ENCODE measurements at regions of chr7 and their contacts with region 1.

Region 1: DNA sequence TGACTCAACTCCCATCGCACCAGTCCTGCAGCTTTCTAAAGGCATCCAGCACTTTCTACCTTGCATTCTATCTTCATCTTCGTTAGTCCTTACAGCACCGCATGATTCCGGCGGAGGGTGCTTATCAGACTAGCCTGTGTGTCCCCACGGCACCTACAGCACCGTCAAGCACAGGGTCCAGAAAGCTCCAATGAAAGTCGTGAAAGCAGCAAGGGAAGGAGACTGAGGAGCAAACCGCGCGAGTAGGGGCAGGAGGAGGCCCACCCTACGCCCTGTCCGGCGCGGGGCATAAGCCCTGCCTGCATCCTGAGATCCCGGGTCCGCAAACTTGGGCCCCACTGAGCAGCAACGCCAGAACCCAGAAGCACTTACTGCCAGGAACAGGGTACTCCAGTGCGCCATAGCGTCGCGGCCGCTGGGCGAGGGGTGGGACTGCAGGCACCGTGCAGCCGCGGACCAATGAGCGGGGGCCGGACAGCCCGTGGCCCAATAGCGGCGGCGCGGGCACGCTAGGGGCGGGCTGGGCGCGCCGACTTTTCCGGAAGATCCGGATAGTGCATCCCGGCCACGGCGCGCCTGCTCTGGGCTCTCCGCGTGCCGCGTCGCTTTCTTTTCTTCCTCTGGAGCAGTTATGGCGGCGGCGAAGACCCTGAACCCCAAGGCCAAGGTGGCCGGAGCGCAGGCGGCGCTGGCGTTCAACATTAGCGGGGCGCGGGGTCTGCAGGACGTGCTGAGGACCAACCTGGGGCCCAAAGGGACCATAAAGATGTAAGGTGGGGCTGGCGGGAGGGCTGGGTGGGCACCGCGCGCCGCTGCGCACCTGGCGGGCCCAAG is 122.1 kb upstream of the VKORC1L1 start:
- DNase-seq: peak; percentile 68 to 91
- H3K4me3 ChIP-seq: peak overlapping the region; percentile 79 to 97 (median 95)
- H3K27ac ChIP-seq: peak overlapping the region; percentile 95
- H3K4me1 ChIP-seq: peaks cover 0 to 2% (median 0%) of the 10 kb centered on the region in 4 experiments; a peak in 1 of 7 replicates
- H3K27me3 ChIP-seq: no peaks in the 10 kb centered on the region
- CTCF ChIP-seq: no peak
- EP300 ChIP-seq: no peak
- POLR2A ChIP-seq: peak in 1 of 2 experiments; percentile 91; a peak in 2 of 3 replicates
- RAD21 ChIP-seq: no peak

Region 2: DNA sequence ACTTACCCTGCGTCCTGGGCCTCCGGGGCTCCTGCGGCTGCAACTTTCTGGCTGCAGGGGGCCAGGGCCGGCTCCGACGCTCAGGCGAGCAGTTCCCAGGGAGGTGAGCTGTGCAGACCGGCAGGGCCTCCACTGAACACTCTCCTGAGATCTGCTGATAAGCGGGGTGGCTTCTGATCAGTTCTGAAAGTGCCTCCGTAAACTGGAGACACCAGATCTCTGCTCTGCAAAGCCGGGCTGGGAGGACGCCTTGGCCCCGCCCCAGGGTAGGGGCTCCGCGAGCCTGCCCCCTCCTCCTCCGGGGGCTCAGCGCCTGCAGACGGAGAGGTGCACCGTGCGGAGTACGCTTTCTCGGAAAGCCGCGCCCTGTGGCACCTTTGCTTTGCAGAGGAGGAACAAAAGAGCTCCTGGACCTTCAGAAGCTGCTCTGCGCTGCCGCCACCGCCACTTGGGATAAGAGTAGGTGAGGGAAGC is 19.1 kb before region 1 on chr7:
- CTCF ChIA-PET with region 1: interaction called, 4 read pairs
- POLR2A ChIA-PET with region 1: interaction called, 15 read pairs
- DNase-seq: peak in 1 of 2 experiments; percentile 78
- H3K4me3 ChIP-seq: peak overlapping the region; percentile 35 to 67 (median 65)
- H3K27ac ChIP-seq: no peak overlapping the region
- H3K4me1 ChIP-seq: no peaks in the 10 kb centered on the region
- H3K27me3 ChIP-seq: no peaks in the 10 kb centered on the region
- CTCF ChIP-seq: peak in 1 of 3 experiments; percentile 6; a peak in 3 of 4 replicates
- EP300 ChIP-seq: no peak
- POLR2A ChIP-seq: no peak; a peak in 1 of 3 replicates
- RAD21 ChIP-seq: no peak